IMR-90 (cell line): ENCODE measurements at regions of chr14 and their contacts with region 1.

Region 1: DNA sequence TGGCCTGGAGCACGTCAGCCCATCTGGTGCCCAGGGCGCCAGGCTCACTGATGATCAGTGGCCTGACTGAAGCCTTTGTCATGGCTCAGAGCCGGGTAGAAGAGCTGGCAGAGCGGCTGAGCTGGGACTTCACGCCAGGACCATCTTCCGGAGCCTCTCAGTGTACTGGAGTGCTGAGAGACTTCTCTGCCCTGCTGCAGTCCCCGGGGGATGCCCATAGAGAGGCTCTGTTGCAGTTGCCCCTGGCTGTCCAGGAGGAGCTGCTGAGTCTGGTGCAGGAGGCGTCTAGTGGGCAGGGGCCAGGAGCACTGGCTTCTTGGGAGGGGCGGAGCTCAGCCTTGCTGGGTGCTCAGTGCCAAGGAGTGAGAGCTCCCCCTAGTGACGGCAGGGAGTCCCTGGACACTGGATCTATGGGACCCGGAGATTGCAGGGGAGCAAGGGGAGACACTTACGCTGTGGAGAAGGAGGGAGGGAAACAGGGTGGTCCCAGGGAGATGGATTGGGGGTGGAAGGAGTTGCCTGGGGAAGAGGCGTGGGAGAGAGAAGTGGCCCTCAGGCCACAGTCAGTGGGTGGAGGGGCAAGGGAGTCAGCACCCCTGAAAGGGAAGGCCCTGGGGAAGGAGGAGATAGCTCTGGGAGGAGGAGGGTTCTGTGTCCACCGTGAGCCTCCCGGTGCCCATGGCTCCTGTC is 2.0 kb downstream of the KHNYN start:
- DNase-seq: peak; percentile 91
- ATAC-seq: peak; percentile 63
- H3K4me3 ChIP-seq: no peak overlapping the region; the same call in 1 of the 2 replicates
- H3K27ac ChIP-seq: peak overlapping the region; percentile 91; the same call in 1 of the 2 replicates
- H3K4me1 ChIP-seq: peaks cover 18% of the 10 kb centered on the region; the same call in 1 of the 2 replicates
- H3K27me3 ChIP-seq: no peaks in the 10 kb centered on the region
- CTCF ChIP-seq: peak; percentile 98
- POLR2A ChIP-seq: 0 out of 2 replicates have a peak, but pooled peaks have one; percentile 52
- RAD21 ChIP-seq: peak; percentile 96

Region 2: DNA sequence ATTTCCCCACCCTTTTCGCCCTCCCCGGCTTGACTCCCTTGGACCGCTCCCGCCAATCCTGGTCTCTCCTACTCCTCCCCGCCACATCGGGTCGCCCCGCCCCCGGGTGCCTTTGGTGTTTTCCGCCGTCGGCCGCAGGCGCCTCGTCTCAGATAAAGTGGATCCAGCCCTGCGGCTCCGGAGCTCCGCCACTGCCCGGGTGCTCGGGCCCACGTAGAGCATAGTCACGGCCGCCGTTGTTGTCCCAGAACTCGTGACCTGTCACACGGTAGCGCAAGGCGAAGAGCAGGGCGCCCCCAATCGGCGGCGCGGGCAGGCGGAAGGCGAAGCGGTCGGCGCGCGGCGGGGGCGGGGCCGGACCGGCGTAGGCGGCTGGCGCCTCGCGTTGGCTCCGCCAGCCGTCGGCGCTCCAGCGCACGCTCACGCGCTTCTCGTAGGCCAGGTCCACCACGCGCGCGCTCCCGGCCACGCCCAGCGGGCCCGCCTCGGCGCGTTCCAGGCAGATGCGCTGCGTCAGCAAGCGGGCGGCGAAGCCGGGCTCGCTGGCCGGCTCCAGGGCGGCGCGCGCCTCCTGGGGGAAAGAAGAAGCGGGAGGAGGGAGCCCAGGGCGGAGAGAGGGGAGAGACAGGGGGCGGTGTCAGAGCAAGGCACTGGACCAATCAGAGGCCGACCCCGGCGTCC is 1130.3 kb before region 1 on chr14:
- CTCF ChIA-PET with region 1: no interaction called
- POLR2A ChIA-PET with region 1: no interaction called
- dilution Hi-C with region 1: no loop called
- in situ Hi-C with region 1: loop called (anchors 25 kb)
- intact Hi-C with region 1: no loop called
- DNase-seq: peak; percentile 98
- ATAC-seq: peak; percentile 84
- H3K4me3 ChIP-seq: peak overlapping the region; percentile 74
- H3K27ac ChIP-seq: peak overlapping the region; percentile 84
- H3K4me1 ChIP-seq: peaks cover 3% of the 10 kb centered on the region
- H3K27me3 ChIP-seq: no peaks in the 10 kb centered on the region
- CTCF ChIP-seq: peak; percentile 88
- POLR2A ChIP-seq: peak; percentile 19
- RAD21 ChIP-seq: no peak; the same call in none of the 2 replicates

Region 3: DNA sequence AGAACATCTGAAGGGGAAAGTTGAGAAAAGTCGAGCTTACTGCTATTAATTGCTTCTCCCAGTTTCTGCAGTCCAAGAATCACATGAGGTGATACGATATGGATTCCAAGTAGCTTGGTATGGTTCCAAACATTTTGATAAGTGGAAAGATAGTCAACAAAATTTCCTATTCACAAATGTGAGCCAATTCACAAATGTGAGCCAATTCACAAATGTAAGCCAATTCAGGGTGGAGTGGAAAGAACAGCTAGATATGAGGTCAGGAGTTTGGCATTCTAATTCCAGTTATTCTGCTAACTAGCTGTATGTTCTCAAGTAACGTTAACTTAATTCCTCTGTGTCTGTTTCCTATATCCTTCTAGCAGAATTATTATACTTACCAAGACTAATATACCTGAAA is 515.7 kb before region 1 on chr14:
- CTCF ChIA-PET with region 1: no interaction called
- POLR2A ChIA-PET with region 1: no interaction called
- dilution Hi-C with region 1: no loop called
- in situ Hi-C with region 1: no loop called
- intact Hi-C with region 1: no loop called
- DNase-seq: no peak
- ATAC-seq: no peak
- H3K4me3 ChIP-seq: no peak overlapping the region
- H3K27ac ChIP-seq: no peak overlapping the region
- H3K4me1 ChIP-seq: no peaks in the 10 kb centered on the region
- H3K27me3 ChIP-seq: peaks cover 3% of the 10 kb centered on the region
- CTCF ChIP-seq: no peak
- POLR2A ChIP-seq: no peak
- RAD21 ChIP-seq: no peak

Region 4: DNA sequence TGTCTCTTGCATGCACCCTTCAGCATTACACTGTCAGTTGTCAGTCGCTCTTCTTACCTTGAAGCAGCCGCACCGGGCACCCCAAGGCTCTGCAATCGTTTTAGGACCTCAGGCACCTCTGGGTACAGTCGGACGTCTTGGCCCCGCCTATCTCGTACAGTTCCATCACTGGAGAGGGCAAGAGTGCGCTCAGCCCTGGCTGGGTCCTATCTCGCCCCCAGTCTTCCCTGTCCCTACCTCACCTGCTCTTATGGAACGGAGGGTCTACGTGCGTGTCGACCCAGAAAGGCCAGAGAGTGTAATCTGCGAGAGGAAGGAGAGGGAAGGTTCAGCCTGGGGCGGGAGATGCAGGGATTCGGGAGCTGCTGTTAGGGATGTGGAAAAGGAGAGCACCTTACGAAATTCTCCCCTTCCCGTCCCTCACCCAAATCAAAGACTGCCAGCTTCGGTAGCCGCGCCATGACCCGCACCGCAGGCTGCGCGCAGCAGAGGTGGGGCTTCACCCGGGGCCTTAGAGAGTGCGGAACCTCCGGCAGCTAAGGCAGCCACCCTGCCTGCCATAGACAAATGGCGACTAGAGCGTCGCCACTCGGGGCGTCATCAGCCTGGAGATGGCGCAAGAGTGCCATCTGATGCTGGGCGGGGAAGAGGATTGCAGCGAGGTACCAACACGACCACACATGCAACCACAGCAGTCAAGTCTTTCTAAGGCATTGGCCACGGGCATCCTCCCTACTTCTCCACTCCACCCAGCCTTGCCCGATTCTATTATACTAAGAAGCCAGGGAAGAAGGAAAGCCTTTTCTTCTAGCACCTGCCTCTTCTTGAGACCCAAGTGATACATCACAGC is 216.0 kb before region 1 on chr14 and contains the start of gene MDP1:
- CTCF ChIA-PET with region 1: no interaction called
- POLR2A ChIA-PET with region 1: no interaction called
- dilution Hi-C with region 1: no loop called
- in situ Hi-C with region 1: no loop called
- intact Hi-C with region 1: loop called (anchors 10 kb)
- DNase-seq: peak; percentile 83
- ATAC-seq: peak; percentile 71
- H3K4me3 ChIP-seq: peak within 1 kb of the TSS; percentile 74
- H3K27ac ChIP-seq: peak within 1 kb of the TSS; percentile 88
- H3K4me1 ChIP-seq: peaks cover 2% of the 10 kb centered on the region
- H3K27me3 ChIP-seq: no peaks in the 10 kb centered on the region
- CTCF ChIP-seq: peak; percentile 75
- POLR2A ChIP-seq: peak; percentile 82
- RAD21 ChIP-seq: peak; percentile 77
- total RNA-seq, gene MDP1: 15.1 and 16.7 TPM in 2 replicates

Region 5: GRCh38 chr14:24241829-24242443 is 189.8 kb before region 1 on chr14:
- CTCF ChIA-PET with region 1: no interaction called
- POLR2A ChIA-PET with region 1: no interaction called
- dilution Hi-C with region 1: no loop called
- in situ Hi-C with region 1: loop called (anchors 10 kb)
- intact Hi-C with region 1: loop called (anchors 2 kb)
- DNase-seq: peak; percentile 89
- ATAC-seq: peak; percentile 93
- H3K4me3 ChIP-seq: peak overlapping the region; percentile 82
- H3K27ac ChIP-seq: peak overlapping the region; percentile 90
- H3K4me1 ChIP-seq: peaks cover 13% of the 10 kb centered on the region
- H3K27me3 ChIP-seq: no peaks in the 10 kb centered on the region
- CTCF ChIP-seq: peak; percentile 45
- POLR2A ChIP-seq: no peak
- RAD21 ChIP-seq: no peak

Region 6: GRCh38 chr14:24332268-24332993 is 99.3 kb before region 1 on chr14:
- CTCF ChIA-PET with region 1: interaction called, 63 read pairs
- POLR2A ChIA-PET with region 1: interaction called, 3 read pairs
- dilution Hi-C with region 1: no loop called
- in situ Hi-C with region 1: loop called (anchors 5 kb)
- intact Hi-C with region 1: loop called (anchors 1 kb)
- DNase-seq: peak; percentile 52
- ATAC-seq: peak; percentile 79
- H3K4me3 ChIP-seq: no peak overlapping the region
- H3K27ac ChIP-seq: no peak overlapping the region
- H3K4me1 ChIP-seq: peaks cover 3% of the 10 kb centered on the region; the same call in 1 of the 2 replicates
- H3K27me3 ChIP-seq: peaks cover 43% of the 10 kb centered on the region
- CTCF ChIP-seq: peak; percentile 64
- POLR2A ChIP-seq: no peak
- RAD21 ChIP-seq: peak; percentile 52

Region 7: GRCh38 chr14:24366721-24367513 is 64.8 kb before region 1 on chr14:
- CTCF ChIA-PET with region 1: interaction called, 30 read pairs
- POLR2A ChIA-PET with region 1: interaction called, 7 read pairs
- dilution Hi-C with region 1: no loop called
- in situ Hi-C with region 1: loop called (anchors 10 kb)
- intact Hi-C with region 1: loop called (anchors 1 kb)
- DNase-seq: peak; percentile 89
- ATAC-seq: peak; percentile 68
- H3K4me3 ChIP-seq: peak overlapping the region; percentile 30
- H3K27ac ChIP-seq: peak overlapping the region; percentile 98
- H3K4me1 ChIP-seq: peaks cover 11% of the 10 kb centered on the region
- H3K27me3 ChIP-seq: no peaks in the 10 kb centered on the region
- CTCF ChIP-seq: no peak
- POLR2A ChIP-seq: no peak
- RAD21 ChIP-seq: no peak